Naive thymus-derived CD4-positive, alpha-beta T cell (primary cell): ENCODE measurements at regions of chr12 and their contacts with region 1.

Region 1: DNA sequence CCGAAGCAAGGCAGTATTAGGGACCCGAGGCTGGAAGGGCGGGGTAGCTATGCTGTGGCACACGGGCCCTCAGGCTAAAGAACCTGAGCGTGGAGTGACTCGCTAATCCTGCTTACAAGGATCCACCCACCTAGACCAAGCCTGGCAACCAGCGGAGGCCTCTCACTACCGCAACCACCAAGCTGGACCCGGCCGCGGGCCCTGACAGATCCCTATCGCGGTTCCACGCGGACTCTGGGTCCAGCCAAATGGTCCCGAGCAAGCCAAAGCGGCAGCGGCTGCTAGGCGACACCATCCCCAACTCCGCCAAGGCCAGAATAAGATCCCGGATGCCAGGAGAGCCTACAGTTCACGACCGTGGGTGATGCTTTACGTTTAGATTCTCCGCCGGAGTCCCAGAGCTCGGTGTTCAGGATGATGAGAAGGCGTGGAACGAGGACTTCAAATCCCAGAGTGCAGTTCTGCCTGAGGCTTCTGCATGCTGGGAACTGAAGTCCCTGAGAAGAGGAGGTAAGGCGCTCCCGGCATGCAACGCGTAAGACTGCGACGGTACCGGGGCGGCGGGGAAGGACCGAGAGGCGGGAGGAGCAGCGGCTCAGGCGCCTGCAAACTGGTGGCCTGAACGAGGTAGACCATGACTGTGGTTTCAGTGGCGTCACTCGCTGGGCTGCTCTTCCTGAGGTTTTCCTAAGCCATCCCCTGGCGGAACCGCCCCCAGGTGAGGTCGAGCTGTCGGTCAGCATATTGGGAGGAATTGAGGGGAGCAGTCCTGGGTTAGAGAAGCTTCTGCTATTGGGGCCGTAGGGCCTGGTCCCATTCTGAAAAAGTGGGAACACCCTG is at the starts of genes CEP290 and TMTC3:
- DNase-seq: peak; percentile 69 to 98 (median 94)
- ATAC-seq: peak; percentile 97
- H3K4me3 ChIP-seq: peak within 1 kb of the TSS; percentile 82
- H3K4me3 Mint-ChIP-seq: peak within 1 kb of the TSS; percentile 88 to 100 (median 96)
- H3K27ac ChIP-seq: peak within 1 kb of the TSS; percentile 84
- H3K27ac Mint-ChIP-seq: peak within 1 kb of the TSS; percentile 66 to 99 (median 94)
- H3K4me1 ChIP-seq: peaks cover 12 to 14% of the 10 kb centered on the region in 2 donors
- H3K4me1 Mint-ChIP-seq: peaks cover 26 to 68% (median 45%) of the 10 kb centered on the region in 7 donors
- H3K27me3 ChIP-seq: no peaks in the 10 kb centered on the region
- H3K27me3 Mint-ChIP-seq: no peaks in the 10 kb centered on the region
- total RNA-seq, gene CEP290: 14.7 to 29.5 (median 19.5) TPM
- total RNA-seq, gene TMTC3: 6.4 to 11.1 (median 7.5) TPM

Region 2: DNA sequence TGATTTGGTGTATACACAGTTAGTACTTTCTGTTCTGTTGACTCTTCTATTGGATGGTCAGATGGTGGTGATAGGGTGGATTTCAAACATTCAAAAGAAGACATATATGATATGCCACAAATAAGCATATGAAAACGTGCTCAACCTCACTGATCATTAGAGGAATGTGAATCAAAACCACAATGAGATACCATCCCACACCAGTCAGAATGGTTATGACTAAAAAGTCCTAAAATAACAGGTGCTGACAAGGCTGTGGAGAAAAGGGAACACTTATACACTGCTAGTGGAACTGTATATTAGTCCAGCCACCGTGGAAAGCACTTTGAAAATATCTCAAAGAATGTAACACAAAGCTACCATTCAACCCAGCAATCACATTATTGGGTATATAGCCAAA is 538.3 kb before region 1 on chr12:
- CTCF ChIA-PET with region 1: no interaction called
- POLR2A ChIA-PET with region 1: no interaction called
- intact Hi-C with region 1: no loop called
- DNase-seq: no peak
- ATAC-seq: no peak
- H3K4me3 ChIP-seq: no peak overlapping the region
- H3K4me3 Mint-ChIP-seq: no peak overlapping the region
- H3K27ac ChIP-seq: no peak overlapping the region
- H3K27ac Mint-ChIP-seq: no peak overlapping the region
- H3K4me1 ChIP-seq: no peaks in the 10 kb centered on the region
- H3K4me1 Mint-ChIP-seq: no peaks in the 10 kb centered on the region
- H3K27me3 ChIP-seq: no peaks in the 10 kb centered on the region
- H3K27me3 Mint-ChIP-seq: no peaks in the 10 kb centered on the region

Region 3: DNA sequence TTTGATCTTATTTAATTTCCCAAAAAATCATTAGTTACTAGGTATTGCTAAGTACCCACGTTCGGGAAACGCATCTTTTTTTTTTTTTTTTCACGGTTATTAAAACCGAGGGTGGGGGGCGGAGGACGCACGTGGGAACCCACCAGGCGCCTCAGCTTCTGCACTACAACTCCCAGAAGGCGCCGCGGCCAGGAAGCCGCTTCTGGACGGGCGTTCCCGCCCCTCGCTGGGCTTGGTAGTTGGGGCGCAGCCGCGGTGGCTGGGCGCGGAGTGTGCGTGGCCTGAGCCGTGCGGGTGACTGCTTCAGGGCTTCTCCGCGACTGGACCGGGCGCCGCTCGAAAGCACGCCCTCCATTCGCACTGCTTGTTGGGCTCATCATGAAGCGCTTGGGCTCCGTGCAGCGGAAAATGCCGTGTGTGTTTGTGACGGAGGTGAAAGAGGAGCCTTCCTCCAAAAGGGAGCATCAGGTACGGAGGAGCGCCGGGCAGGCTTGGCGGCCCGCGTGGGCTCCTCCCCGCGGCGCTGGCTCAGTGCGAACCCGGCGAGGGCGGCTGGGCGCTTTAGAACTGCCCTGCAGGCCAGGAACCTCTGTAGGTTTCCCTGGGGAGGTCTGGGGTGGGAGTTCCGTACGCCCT is 106.6 kb before region 1 on chr12:
- CTCF ChIA-PET with region 1: no interaction called
- POLR2A ChIA-PET with region 1: interaction called, 14 read pairs
- intact Hi-C with region 1: loop called (anchors 1 kb)
- DNase-seq: peak; percentile 75 to 89 (median 85)
- ATAC-seq: peak; percentile 99
- H3K4me3 ChIP-seq: peak overlapping the region; percentile 89
- H3K4me3 Mint-ChIP-seq: peak overlapping the region; percentile 92 to 99 (median 96)
- H3K27ac ChIP-seq: peak overlapping the region; percentile 81
- H3K27ac Mint-ChIP-seq: peak overlapping the region; percentile 86 to 98 (median 92)
- H3K4me1 ChIP-seq: peaks cover 14 to 19% of the 10 kb centered on the region in 2 donors
- H3K4me1 Mint-ChIP-seq: peaks cover 22 to 64% (median 53%) of the 10 kb centered on the region in 7 donors
- H3K27me3 ChIP-seq: no peaks in the 10 kb centered on the region
- H3K27me3 Mint-ChIP-seq: no peaks in the 10 kb centered on the region

Region 4: DNA sequence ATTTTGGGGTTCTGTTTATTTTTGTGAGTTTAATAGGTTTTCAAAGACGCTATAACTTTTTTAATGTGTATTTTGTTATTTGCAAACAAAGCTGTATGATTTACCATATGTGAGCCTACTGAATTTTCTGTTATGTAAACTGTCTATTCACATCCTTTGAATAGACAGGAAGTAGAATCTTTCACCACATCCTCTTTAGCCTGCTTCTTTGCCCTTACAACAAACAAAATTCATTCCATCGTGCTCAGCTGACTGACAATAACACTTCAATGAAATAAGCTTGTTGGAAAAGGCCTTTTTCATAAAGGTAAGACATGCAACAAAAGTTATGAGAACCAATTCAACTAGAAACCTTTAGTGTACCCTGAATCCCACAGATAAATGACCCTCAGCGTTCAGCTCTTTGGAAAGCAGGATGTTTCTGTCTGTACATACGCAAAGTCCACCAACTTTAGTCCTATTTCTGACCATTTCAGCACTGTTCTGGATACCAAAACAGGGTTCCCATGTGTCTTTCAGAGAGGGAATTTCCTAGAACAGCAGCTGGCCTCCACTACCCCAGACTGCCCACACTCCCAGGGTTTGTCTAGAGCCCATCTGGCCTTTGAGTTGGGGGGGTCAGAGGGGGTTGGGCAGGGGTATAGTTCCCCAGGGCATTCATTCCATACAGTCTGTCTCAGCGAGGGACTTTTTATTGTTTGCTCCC is 1139.0 kb after region 1 on chr12:
- CTCF ChIA-PET with region 1: no interaction called
- POLR2A ChIA-PET with region 1: no interaction called
- intact Hi-C with region 1: loop called in 1 of 2 experiments (anchors 1 kb)
- DNase-seq: peak in 7 of 9 donors; percentile 7 to 79 (median 52)
- ATAC-seq: peak; percentile 90
- H3K4me3 ChIP-seq: peak overlapping the region; percentile 1
- H3K4me3 Mint-ChIP-seq: peak overlapping the region in 8 of 10 donors; percentile 44 to 80 (median 64)
- H3K27ac ChIP-seq: no peak overlapping the region
- H3K27ac Mint-ChIP-seq: peak overlapping the region in 8 of 9 donors; percentile 38 to 89 (median 66)
- H3K4me1 ChIP-seq: peaks cover 18 to 22% of the 10 kb centered on the region in 2 donors
- H3K4me1 Mint-ChIP-seq: peaks cover 15 to 47% (median 37%) of the 10 kb centered on the region in 7 donors
- H3K27me3 ChIP-seq: no peaks in the 10 kb centered on the region
- H3K27me3 Mint-ChIP-seq: no peaks in the 10 kb centered on the region